Mammary epithelial cell (primary cell): ENCODE measurements at regions of chr20 and their contacts with region 1.

Region 1: DNA sequence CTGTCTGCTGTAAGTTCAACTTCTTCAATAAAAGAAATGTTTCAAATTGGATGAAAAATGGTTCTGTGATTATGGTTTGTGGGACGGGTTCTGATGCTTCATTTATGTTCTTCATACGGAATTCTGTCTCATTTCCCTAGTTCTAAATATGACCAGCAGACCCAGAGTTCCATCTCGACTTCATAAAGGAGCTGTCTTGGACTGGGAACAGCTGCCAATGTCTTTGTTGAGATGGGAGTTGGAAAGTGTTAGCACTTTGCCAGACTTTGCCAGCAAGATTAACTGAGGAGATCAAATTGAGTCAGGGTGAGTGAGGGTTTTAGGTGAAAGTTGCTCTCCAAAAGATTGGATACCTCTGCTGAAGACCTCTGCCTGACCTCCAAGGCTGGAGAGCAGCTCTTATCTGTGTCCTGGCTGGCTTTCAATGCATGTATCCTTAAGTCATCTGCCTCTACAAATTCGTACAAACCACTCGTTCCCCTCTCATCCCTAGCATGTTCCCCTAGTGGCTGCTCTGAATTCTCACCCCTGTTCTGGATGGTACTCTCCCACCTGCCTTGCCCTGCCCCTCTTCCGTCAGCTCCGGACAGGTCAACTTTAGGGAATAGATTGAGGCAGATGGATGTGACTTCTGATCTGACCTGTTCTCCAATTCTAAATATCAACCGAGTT is at the start of gene EFCAB8:
- DNase-seq: no peak
- H3K4me3 ChIP-seq: no peak within 1 kb of the TSS
- H3K27ac ChIP-seq: peak within 1 kb of the TSS; percentile 8
- H3K4me1 ChIP-seq: peaks cover 7% of the 10 kb centered on the region
- H3K27me3 ChIP-seq: no peaks in the 10 kb centered on the region
- CTCF ChIP-seq: no peak
- total RNA-seq, gene EFCAB8: 0.47 to 0.50 TPM

Region 2: GRCh38 chr20:32810941-32811340 is 47.9 kb before region 1 on chr20:
- CTCF ChIA-PET with region 1: no interaction called
- dilution Hi-C with region 1: loop called (anchors 5 kb)
- in situ Hi-C with region 1: no loop called
- intact Hi-C with region 1: no loop called
- DNase-seq: no peak
- H3K4me3 ChIP-seq: no peak overlapping the region
- H3K27ac ChIP-seq: no peak overlapping the region
- H3K4me1 ChIP-seq: peaks cover 15% of the 10 kb centered on the region
- H3K27me3 ChIP-seq: no peaks in the 10 kb centered on the region
- CTCF ChIP-seq: no peak

Region 3: GRCh38 chr20:33026072-33026778 is 167.4 kb after region 1 on chr20:
- CTCF ChIA-PET with region 1: no interaction called
- dilution Hi-C with region 1: no loop called
- in situ Hi-C with region 1: no loop called
- intact Hi-C with region 1: no loop called
- DNase-seq: no peak
- H3K4me3 ChIP-seq: no peak overlapping the region
- H3K27ac ChIP-seq: no peak overlapping the region
- H3K4me1 ChIP-seq: no peaks in the 10 kb centered on the region
- H3K27me3 ChIP-seq: no peaks in the 10 kb centered on the region
- CTCF ChIP-seq: no peak